ENCODE measurements at regions of chr16 and their contacts with region 1.

Region 1: GRCh38 chr16:50741808-50742575 is at the start of gene CYLD:
- DNase-seq: peak; percentile 100
- total RNA-seq, gene CYLD: 39.5 TPM

Region 2: GRCh38 chr16:49588729-49589384 is 1153.1 kb before region 1 on chr16:
- intact Hi-C with region 1: no loop called
- DNase-seq: peak; percentile 60

Region 3: GRCh38 chr16:50437769-50438437 is 304.1 kb before region 1 on chr16:
- intact Hi-C with region 1: no loop called
- DNase-seq: no peak

Region 4: DNA sequence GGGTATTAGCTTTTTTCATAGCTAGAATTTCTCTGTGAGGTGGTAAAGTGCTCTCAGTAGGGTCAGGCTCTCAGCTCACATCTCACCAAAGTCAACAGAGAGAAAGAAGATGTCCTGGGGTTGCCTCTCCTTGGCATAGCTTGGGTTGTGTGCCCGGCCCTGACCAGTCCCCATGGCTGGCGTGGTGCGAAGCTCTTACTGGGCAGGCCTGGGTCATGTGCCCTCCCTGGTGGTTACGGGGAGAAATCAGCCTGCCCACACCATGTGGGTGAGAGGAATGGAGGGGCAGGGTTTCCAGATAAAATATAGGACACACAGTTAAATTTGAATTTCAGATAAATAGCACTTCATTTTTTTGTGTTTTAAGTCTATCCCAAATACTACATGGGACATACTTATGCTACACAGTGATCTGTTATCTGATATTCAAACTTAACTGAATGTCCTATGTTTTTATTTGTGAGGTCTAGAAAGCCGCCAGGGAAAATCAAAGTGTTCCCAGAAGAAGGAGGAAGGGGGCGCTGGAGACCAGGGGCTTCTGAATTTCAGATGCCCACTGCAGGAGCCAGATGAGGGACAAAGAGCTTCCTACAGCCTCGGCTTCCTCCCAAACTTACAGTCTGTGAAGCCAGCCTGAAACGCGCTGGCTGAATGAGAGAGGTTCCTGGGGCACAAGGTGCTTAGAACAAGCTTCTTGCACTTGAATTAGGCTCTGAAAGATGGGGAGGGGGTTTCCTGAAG is 148.4 kb before region 1 on chr16:
- intact Hi-C with region 1: loop called (anchors 10 kb)
- DNase-seq: no peak

Region 5: GRCh38 chr16:50806099-50807062 is 64.4 kb after region 1 on chr16:
- intact Hi-C with region 1: loop called (anchors 5 kb)
- DNase-seq: peak; percentile 83

Measured in cardiac septum (tissue), 1 donor.